Pancreas (tissue), 10 donors: ENCODE measurements at regions of chr17 and their contacts with region 1.

Region 1: DNA sequence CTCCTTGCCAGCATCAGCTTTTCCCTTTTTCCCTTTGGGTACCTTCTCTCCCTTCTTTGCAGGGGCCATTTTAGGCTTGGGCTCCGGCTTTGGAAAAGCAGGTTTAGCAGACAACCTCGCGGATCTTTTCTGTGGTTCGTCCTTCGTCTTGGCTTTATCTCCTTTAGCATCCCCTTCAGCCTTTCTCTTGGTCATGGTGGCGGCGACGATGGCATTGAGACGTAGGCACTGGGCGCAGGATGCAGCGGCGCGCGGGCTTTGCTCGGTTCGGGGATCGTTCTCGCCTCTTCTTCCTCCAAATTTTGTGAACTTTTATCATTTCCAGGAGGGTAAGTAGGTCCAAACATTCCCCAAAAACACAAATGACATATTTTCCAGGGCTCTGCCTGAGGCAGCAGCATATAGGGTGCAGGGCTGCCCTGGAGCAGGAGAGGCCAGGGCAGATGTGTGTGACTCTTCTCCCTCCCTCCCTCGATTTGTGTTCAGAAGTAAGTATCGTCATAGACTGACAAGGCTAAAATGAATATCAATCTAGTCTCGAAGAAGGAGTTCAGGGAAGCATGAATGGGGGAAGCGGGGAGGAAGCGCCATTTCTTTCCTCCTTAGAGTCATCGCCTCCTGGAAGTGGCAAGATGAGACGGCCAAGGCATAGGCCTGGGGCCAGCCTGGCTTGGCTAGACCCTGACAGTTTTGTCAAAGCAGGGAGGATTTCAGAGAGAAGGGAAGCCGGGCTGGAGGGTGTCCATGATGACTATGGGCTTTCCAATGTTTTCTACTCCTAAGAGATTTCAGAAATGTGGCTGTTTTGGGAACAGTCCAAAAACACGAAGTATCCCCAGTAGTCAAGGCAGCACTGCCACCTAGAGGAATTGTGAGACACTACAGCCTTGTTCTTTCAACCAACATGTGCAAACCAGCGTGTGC is 13.2 kb downstream of the CHCT1 start:
- DNase-seq: peak in 4 of 6 donors; percentile 39 to 81 (median 60)
- ATAC-seq: peak; percentile 86 to 99 (median 96)
- H3K4me3 ChIP-seq: no peak overlapping the region
- H3K27ac ChIP-seq: no peak overlapping the region
- H3K4me1 ChIP-seq: no peaks in the 10 kb centered on the region
- H3K27me3 ChIP-seq: no peaks in the 10 kb centered on the region
- CTCF ChIP-seq: peak; percentile 81 to 92 (median 84)

Region 2: DNA sequence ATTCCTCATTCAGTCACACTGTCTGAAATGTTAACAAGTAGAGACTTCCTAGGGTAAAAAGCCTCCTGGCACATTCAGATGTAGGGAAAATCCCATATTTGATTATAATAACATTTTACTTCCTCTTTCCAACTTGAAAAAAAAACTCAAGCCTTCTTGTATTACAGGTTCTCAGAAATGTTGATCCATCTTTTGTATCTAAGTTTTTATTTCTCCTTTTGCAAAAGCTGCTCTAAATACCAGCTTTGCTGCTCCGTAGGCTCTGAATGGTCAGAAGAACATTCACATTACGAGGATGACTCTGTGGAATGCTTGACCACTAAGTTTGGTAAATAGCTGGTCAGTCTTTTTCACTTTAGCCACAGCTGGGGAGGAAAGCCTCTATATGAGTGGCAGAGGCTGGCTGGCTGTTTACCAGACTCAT is 343.6 kb before region 1 on chr17:
- intact Hi-C with region 1: loop called in 1 of 3 experiments (anchors 10 kb)
- DNase-seq: no peak
- ATAC-seq: peak in 3 of 4 donors; percentile 28 to 74 (median 67)
- H3K4me3 ChIP-seq: no peak overlapping the region
- H3K27ac ChIP-seq: peak overlapping the region in 2 of 4 donors; percentile 71 to 82
- H3K4me1 ChIP-seq: peaks cover 0 to 14% (median 0%) of the 10 kb centered on the region in 3 donors
- H3K27me3 ChIP-seq: no peaks in the 10 kb centered on the region
- CTCF ChIP-seq: no peak

Region 3: DNA sequence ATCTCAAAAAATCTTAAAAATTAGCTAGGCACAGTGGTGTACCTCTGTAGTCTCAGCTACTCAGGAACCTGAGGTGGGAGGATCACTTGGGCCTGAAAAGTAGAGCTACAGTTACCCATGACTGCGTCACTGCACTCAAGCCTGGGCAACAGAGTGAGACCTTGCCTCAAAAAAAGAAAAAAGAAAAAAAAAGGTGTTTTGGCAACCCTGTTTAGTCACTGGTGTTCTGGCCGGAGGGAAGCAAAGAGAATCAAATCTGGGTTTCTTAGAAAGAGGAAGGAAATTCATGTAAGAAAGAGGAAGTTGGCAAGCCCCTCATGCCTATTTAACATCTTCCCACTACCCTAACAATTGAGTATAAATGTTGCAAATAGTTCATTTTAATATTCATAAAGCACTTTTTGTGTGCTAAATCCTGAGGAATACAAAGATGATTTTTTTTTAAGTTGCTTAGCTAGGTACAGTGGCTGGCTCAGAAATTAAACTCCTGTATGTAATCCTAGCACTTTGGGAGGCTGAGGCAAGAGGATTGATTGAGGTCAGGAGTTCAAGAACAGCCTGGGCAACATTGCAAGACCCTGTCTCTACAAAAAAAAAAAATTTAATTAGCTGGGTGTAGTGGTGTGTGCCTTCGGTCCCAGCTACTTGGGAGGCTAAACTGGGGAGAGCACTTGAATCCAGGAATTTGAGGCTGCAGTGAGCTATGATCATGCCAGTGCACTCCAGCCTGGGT is 37.1 kb before region 1 on chr17:
- intact Hi-C with region 1: no loop called
- DNase-seq: no peak
- ATAC-seq: peak in 2 of 4 donors; percentile 27 to 61
- H3K4me3 ChIP-seq: no peak overlapping the region
- H3K27ac ChIP-seq: peak overlapping the region in 2 of 4 donors; percentile 8 to 20
- H3K4me1 ChIP-seq: no peaks in the 10 kb centered on the region
- H3K27me3 ChIP-seq: no peaks in the 10 kb centered on the region
- CTCF ChIP-seq: no peak